Upper lobe of right lung (tissue), 1 donor: ENCODE measurements at regions of chr19 and their contacts with region 1.

Region 1: GRCh38 chr19:13784731-13785452 is 10.4 kb upstream of the ZSWIM4 start:
- DNase-seq: peak; percentile 92
- ATAC-seq: peak; percentile 91
- H3K4me3 ChIP-seq: no peak overlapping the region
- H3K27ac ChIP-seq: peak overlapping the region; percentile 30
- H3K4me1 ChIP-seq: peaks cover 34% of the 10 kb centered on the region
- H3K27me3 ChIP-seq: no peaks in the 10 kb centered on the region
- CTCF ChIP-seq: peak; percentile 82

Region 2: GRCh38 chr19:13861732-13862531 is 77.0 kb after region 1 on chr19:
- intact Hi-C with region 1: loop called (anchors 5 kb)
- DNase-seq: peak; percentile 96
- ATAC-seq: peak; percentile 96
- H3K4me3 ChIP-seq: peak overlapping the region; percentile 54
- H3K27ac ChIP-seq: peak overlapping the region; percentile 94
- H3K4me1 ChIP-seq: peaks cover 33% of the 10 kb centered on the region
- H3K27me3 ChIP-seq: no peaks in the 10 kb centered on the region
- CTCF ChIP-seq: peak; percentile 99